ENCODE measurements at regions of chr6 and their contacts with region 1.

Region 1: DNA sequence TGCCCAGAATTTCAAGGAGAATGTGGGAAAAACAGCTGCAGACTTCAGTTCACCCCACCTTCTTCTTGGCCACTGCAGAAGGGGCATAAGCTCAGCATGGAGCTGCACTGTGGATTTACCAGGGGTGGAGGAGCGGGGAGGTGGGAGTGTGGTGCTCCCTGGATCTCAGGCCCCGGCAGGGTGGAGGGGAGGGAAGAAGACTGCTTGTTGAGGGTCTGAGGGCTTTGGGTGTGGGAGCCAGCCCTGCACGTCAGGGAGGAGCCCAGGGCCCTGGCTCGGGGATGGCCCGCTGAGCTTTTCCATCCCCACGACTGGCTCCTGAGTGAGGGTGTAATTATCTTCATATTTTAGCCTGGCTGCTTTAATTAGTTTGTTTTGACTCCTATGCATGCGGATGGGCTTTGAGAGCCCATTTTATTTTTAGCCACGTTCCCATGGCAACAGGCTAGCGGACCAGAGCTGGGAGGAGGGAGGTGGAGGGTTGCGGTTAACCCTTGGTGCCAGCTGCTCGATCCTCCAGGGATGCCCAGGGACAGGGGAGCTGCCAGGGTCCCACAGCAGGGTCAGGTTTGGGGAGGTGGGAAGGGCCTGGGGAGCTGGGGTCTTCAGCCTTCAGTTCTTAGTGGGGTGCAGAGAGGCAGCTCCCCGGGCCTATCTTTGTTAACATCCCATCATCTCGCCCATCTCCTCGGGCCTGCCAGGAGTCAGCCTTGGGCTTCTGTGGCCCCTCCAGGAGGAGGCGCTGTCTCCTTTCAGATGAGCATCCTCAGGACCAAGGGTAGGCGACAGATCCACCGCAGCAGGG is 68.2 kb downstream of the RAB44 start:
- DNase-seq: peak; percentile 76 to 90
- ATAC-seq: peak; percentile 82 to 93 (median 87)
- H3K4me3 ChIP-seq: no peak overlapping the region
- H3K4me3 Mint-ChIP-seq: peak overlapping the region; percentile 35
- H3K27ac ChIP-seq: no peak overlapping the region
- H3K27ac Mint-ChIP-seq: no peak overlapping the region
- H3K4me1 ChIP-seq: peaks cover 53% of the 10 kb centered on the region
- H3K4me1 Mint-ChIP-seq: peaks cover 30 to 36% of the 10 kb centered on the region in 2 donors
- H3K27me3 ChIP-seq: no peaks in the 10 kb centered on the region
- H3K27me3 Mint-ChIP-seq: no peaks in the 10 kb centered on the region
- CTCF ChIP-seq: peak; percentile 91

Region 2: GRCh38 chr6:36781669-36782068 is 15.9 kb after region 1 on chr6:
- intact Hi-C with region 1: loop called (anchors 2 kb)
- DNase-seq: no peak
- ATAC-seq: no peak
- H3K4me3 ChIP-seq: no peak overlapping the region
- H3K4me3 Mint-ChIP-seq: no peak overlapping the region
- H3K27ac ChIP-seq: no peak overlapping the region
- H3K27ac Mint-ChIP-seq: no peak overlapping the region
- H3K4me1 ChIP-seq: peaks cover 30% of the 10 kb centered on the region
- H3K4me1 Mint-ChIP-seq: peaks cover 5 to 39% of the 10 kb centered on the region in 2 donors
- H3K27me3 ChIP-seq: peaks cover 2% of the 10 kb centered on the region
- H3K27me3 Mint-ChIP-seq: peaks cover 0 to 3% of the 10 kb centered on the region in 2 donors
- CTCF ChIP-seq: no peak

Region 3: DNA sequence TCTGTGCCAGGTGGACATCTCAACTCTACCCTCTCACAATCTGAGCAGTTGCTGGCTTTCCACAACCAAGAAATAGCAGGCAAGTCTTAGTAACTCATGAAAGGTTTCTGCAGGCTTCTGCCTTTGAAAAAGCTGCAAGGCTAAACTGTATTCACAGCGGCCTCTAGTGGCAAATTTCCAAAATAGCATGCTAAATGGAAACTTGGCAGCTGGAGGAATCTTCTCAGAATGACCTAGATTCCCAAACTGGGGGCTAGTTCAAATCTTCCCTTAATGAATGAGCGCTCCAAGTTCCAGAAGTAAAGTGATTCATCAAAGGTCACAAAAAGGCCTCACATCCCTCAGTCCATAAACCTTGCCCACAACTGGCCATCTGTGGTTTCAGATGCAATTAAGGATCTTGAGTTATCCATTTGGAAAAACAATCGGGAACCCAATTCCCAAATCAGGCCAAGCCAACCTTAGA is 85.4 kb after region 1 on chr6:
- intact Hi-C with region 1: loop called (anchors 1 kb)
- DNase-seq: peak in 1 of 2 donors; percentile 70
- ATAC-seq: peak in 2 of 3 donors; percentile 42 to 47
- H3K4me3 ChIP-seq: no peak overlapping the region
- H3K4me3 Mint-ChIP-seq: no peak overlapping the region
- H3K27ac ChIP-seq: no peak overlapping the region
- H3K27ac Mint-ChIP-seq: no peak overlapping the region
- H3K4me1 ChIP-seq: no peaks in the 10 kb centered on the region
- H3K4me1 Mint-ChIP-seq: no peaks in the 10 kb centered on the region
- H3K27me3 ChIP-seq: no peaks in the 10 kb centered on the region
- H3K27me3 Mint-ChIP-seq: peaks cover 13 to 29% of the 10 kb centered on the region in 2 donors
- CTCF ChIP-seq: peak; percentile 71

Measured in natural killer cell (primary cell).